Dorsolateral prefrontal cortex (tissue), 120 donors: ENCODE measurements at regions of chr14 and their contacts with region 1.

Region 1: DNA sequence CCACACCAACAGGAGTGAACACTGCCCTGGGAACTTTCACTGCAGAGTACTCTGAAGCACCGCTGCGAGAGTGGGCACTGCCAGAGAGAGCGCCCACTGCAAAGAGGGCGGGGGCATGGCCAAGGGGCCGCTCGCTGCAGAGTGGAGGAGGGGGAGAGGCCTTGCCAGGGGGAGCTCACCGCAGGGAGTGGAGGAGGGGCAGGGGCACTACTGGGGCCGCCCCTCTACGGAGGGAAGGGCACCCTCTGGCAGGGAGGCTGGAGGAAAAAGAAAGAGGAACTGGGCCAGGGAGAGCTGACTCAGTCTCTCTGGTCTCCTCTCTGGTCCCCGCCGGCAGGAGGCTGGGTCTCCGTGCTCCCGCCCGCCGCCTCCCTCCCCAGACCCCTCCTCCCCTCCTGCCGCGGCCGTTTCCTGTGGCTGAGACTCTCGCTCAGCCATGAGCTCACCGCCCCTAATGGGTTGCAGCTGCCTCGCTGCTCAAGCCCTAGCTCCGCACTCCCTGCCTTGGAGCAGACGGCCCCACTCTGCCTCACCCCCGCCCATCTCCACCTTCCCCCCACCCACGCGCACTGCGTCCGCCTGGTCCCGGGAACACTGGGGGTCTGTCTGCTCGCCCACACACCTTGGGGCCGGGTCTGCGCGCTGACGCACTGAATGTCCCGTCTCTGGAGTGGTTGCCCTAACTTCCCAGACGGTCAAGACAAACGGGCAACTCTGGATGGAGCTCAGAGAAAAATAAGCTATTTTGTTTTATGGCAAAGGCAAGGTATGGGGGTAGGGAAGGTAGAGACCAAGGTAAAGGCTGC is 1.3 kb downstream of the ARHGEF40 start:
- DNase-seq: peak in 8 of 10 donors; percentile 41 to 85 (median 64)
- H3K4me3 ChIP-seq: peak overlapping the region; percentile 52 to 85 (median 73)
- H3K27ac ChIP-seq: peak overlapping the region in 58 of 59 donors; percentile 18 to 98 (median 95)
- H3K27me3 ChIP-seq: peaks cover 0 to 23% (median 0%) of the 10 kb centered on the region in 45 donors
- CTCF ChIP-seq: peak in 19 of 56 donors; percentile 4 to 39 (median 23)

Region 2: GRCh38 chr14:20970983-20971704 is 100.3 kb before region 1 on chr14:
- intact Hi-C with region 1: no loop called
- DNase-seq: peak; percentile 66 to 89 (median 76)
- H3K4me3 ChIP-seq: peak overlapping the region; percentile 54 to 97 (median 70)
- H3K27ac ChIP-seq: peak overlapping the region in 55 of 59 donors; percentile 10 to 88 (median 68)
- H3K27me3 ChIP-seq: peaks cover 0 to 20% (median 0%) of the 10 kb centered on the region in 45 donors
- CTCF ChIP-seq: peak; percentile 52 to 88 (median 78)

Region 3: GRCh38 chr14:21024585-21025370 is 46.6 kb before region 1 on chr14 and contains the start of gene NDRG2:
- intact Hi-C with region 1: loop called in 1 of 2 experiments (anchors 5 kb)
- DNase-seq: peak; percentile 23 to 80 (median 68)
- H3K4me3 ChIP-seq: peak within 1 kb of the TSS; percentile 67 to 95 (median 82)
- H3K27ac ChIP-seq: peak within 1 kb of the TSS; percentile 76 to 100 (median 99)
- H3K27me3 ChIP-seq: peaks cover 0 to 30% (median 0%) of the 10 kb centered on the region in 45 donors
- CTCF ChIP-seq: peak in 7 of 56 donors; percentile 6 to 36 (median 17)
- total RNA-seq, gene NDRG2: 513 to 2,446 (median 961) TPM

Region 4: GRCh38 chr14:21092273-21093011 is 21.0 kb after region 1 on chr14:
- intact Hi-C with region 1: loop called in 1 of 2 experiments (anchors 1 kb)
- DNase-seq: peak; percentile 65 to 83 (median 75)
- H3K4me3 ChIP-seq: peak overlapping the region in 19 of 59 donors; percentile 0 to 36 (median 17)
- H3K27ac ChIP-seq: peak overlapping the region in 41 of 59 donors; percentile 2 to 81 (median 34)
- H3K27me3 ChIP-seq: no peaks in the 10 kb centered on the region
- CTCF ChIP-seq: peak; percentile 65 to 100 (median 100)

Region 5: GRCh38 chr14:21103710-21104447 is 32.5 kb after region 1 on chr14:
- intact Hi-C with region 1: loop called (anchors 1 to 2 kb)
- DNase-seq: peak; percentile 92 to 99 (median 98)
- H3K4me3 ChIP-seq: peak overlapping the region; percentile 57 to 93 (median 79)
- H3K27ac ChIP-seq: peak overlapping the region; percentile 90 to 100 (median 99)
- H3K27me3 ChIP-seq: no peaks in the 10 kb centered on the region
- CTCF ChIP-seq: peak in 51 of 56 donors; percentile 12 to 83 (median 67)